ENCODE measurements at regions of chr2 and their contacts with region 1.

Region 1: GRCh38 chr2:181305301-181306123 is 151.7 kb upstream of the ITGA4 start:
- DNase-seq: peak; percentile 22
- ATAC-seq: peak; percentile 49
- H3K4me3 Mint-ChIP-seq: peak overlapping the region; percentile 70
- H3K27ac Mint-ChIP-seq: peak overlapping the region; percentile 95
- H3K4me1 Mint-ChIP-seq: peaks cover 69% of the 10 kb centered on the region
- H3K27me3 Mint-ChIP-seq: no peaks in the 10 kb centered on the region
- CTCF ChIP-seq: no peak

Region 2: DNA sequence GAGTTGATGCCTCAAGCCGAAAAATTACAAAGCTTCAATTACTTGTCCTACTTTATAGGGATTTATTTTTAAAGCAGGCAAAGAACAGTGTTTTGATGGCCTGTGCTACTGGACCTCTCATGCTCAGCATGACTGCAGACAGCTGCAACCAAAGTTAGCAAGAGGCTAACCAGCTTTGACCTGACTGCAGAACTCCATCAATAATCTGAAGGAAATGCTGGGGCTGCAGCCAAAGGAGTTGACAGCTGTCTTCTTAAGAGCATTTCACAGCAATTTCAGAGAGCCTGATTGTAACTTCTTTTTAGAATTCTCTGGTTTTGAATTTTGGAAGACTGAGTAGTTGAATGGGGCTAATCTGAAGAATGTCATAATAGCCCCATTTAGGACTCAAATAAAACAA is 1994.4 kb before region 1 on chr2:
- CTCF ChIA-PET with region 1: no interaction called
- POLR2A ChIA-PET with region 1: no interaction called
- intact Hi-C with region 1: no loop called
- DNase-seq: no peak
- ATAC-seq: no peak
- H3K4me3 Mint-ChIP-seq: no peak overlapping the region
- H3K27ac Mint-ChIP-seq: no peak overlapping the region
- H3K4me1 Mint-ChIP-seq: peaks cover 2% of the 10 kb centered on the region
- H3K27me3 Mint-ChIP-seq: peaks cover 4% of the 10 kb centered on the region
- CTCF ChIP-seq: no peak

Region 3: GRCh38 chr2:180952082-180952481 is 353.4 kb before region 1 on chr2:
- CTCF ChIA-PET with region 1: no interaction called
- POLR2A ChIA-PET with region 1: no interaction called
- intact Hi-C with region 1: no loop called
- DNase-seq: no peak
- ATAC-seq: no peak
- H3K4me3 Mint-ChIP-seq: no peak overlapping the region
- H3K27ac Mint-ChIP-seq: no peak overlapping the region
- H3K4me1 Mint-ChIP-seq: no peaks in the 10 kb centered on the region
- H3K27me3 Mint-ChIP-seq: peaks cover 12% of the 10 kb centered on the region
- CTCF ChIP-seq: no peak

Region 4: GRCh38 chr2:180980106-180980942 is 325.2 kb before region 1 on chr2 and contains the start of gene UBE2E3:
- CTCF ChIA-PET with region 1: interaction called, 3 read pairs
- POLR2A ChIA-PET with region 1: no interaction called
- intact Hi-C with region 1: loop called (anchors 5 kb)
- DNase-seq: peak; percentile 79
- ATAC-seq: peak; percentile 80
- H3K4me3 Mint-ChIP-seq: peak within 1 kb of the TSS; percentile 93
- H3K27ac Mint-ChIP-seq: peak within 1 kb of the TSS; percentile 95
- H3K4me1 Mint-ChIP-seq: peaks cover 37% of the 10 kb centered on the region
- H3K27me3 Mint-ChIP-seq: no peaks in the 10 kb centered on the region
- CTCF ChIP-seq: no peak
- total RNA-seq, gene UBE2E3: 33.1 and 33.6 TPM in 2 replicates

Region 5: DNA sequence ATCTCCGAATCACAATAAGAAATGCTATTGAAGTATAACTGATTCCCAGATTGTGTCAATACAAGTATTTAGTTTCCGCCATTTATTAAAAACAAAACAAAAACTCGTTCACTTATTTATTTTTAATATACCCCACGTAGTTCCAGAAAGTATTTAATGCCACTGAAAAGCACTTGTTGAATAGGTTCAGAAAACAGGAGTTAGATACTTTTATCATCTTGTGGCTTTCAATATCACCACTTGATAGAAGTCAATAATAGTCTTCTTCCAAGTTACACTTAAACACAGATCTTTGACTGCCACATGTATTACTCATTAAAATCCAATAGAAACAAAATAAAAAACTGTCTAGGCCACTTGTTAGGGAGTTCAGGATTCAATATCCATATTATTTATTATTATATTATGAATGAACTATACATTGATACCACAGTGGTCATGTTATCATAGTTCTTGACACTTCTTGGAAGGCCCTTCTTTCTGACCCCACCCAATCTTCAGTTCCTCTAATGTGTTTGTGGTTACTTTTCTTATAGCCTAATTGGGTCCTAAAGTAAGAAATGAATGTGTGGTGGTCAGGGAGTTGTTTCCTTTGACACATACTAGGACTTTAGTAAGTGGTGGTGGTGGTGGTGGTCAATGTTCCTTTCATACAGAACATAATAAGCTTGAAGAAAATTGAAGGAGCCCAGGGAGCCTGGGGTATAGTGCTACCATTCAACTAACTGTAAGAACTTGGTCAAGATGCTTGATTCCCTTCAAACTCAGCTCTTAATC is 69.6 kb before region 1 on chr2:
- CTCF ChIA-PET with region 1: no interaction called
- POLR2A ChIA-PET with region 1: no interaction called
- intact Hi-C with region 1: loop called (anchors 5 kb)
- DNase-seq: no peak
- ATAC-seq: peak; percentile 42
- H3K4me3 Mint-ChIP-seq: no peak overlapping the region
- H3K27ac Mint-ChIP-seq: no peak overlapping the region
- H3K4me1 Mint-ChIP-seq: peaks cover 15% of the 10 kb centered on the region
- H3K27me3 Mint-ChIP-seq: no peaks in the 10 kb centered on the region
- CTCF ChIP-seq: no peak

Region 6: GRCh38 chr2:181411105-181411849 is 105.8 kb after region 1 on chr2:
- CTCF ChIA-PET with region 1: interaction called, 7 read pairs
- POLR2A ChIA-PET with region 1: interaction called, 8 read pairs
- intact Hi-C with region 1: loop called (anchors 1 kb)
- DNase-seq: peak; percentile 54
- ATAC-seq: peak; percentile 98
- H3K4me3 Mint-ChIP-seq: peak overlapping the region; percentile 52
- H3K27ac Mint-ChIP-seq: peak overlapping the region; percentile 86
- H3K4me1 Mint-ChIP-seq: peaks cover 88% of the 10 kb centered on the region
- H3K27me3 Mint-ChIP-seq: no peaks in the 10 kb centered on the region
- CTCF ChIP-seq: no peak

Region 7: GRCh38 chr2:181457121-181457740 is 151.7 kb after region 1 on chr2 and contains the start of gene ITGA4:
- CTCF ChIA-PET with region 1: interaction called, 178 read pairs
- POLR2A ChIA-PET with region 1: interaction called, 289 read pairs
- intact Hi-C with region 1: loop called (anchors 1 kb)
- DNase-seq: peak; percentile 87
- ATAC-seq: peak; percentile 78
- H3K4me3 Mint-ChIP-seq: peak within 1 kb of the TSS; percentile 97
- H3K27ac Mint-ChIP-seq: peak within 1 kb of the TSS; percentile 97
- H3K4me1 Mint-ChIP-seq: peaks cover 64% of the 10 kb centered on the region
- H3K27me3 Mint-ChIP-seq: no peaks in the 10 kb centered on the region
- CTCF ChIP-seq: peak; percentile 23
- total RNA-seq, gene ITGA4: 89.2 and 104 TPM in 2 replicates

Region 8: DNA sequence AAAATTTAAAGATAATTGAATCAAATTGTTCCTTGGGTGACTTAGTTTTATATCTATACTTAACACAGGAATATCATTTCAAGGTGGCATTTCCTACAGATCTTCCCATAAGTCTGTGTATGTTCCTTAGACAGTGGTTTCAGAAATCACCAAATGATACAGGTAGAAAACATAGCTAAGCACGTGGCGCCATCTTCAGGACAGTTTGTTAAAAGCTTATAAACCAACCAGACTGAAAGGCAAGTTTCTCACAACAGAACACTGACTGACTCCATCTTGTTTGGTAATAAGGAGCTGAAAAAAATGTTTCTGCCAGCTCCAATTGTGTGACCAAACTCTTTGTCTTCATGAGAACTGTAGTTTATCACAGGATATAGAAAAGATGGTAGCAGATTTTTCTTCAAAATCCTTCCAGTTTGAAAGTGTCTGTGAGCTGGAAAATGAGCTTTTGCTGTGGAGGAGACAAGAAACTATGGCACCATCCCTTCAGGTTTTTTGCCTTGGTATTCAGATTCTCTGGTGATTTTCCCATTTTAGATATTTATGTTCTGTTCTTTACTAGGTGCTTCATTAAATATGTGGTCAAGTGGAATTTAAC is 409.6 kb after region 1 on chr2:
- CTCF ChIA-PET with region 1: interaction called, 28 read pairs
- POLR2A ChIA-PET with region 1: no interaction called
- intact Hi-C with region 1: loop called (anchors 5 kb)
- DNase-seq: peak; percentile 26
- ATAC-seq: peak; percentile 71
- H3K4me3 Mint-ChIP-seq: no peak overlapping the region
- H3K27ac Mint-ChIP-seq: no peak overlapping the region
- H3K4me1 Mint-ChIP-seq: no peaks in the 10 kb centered on the region
- H3K27me3 Mint-ChIP-seq: no peaks in the 10 kb centered on the region
- CTCF ChIP-seq: no peak

Region 9: DNA sequence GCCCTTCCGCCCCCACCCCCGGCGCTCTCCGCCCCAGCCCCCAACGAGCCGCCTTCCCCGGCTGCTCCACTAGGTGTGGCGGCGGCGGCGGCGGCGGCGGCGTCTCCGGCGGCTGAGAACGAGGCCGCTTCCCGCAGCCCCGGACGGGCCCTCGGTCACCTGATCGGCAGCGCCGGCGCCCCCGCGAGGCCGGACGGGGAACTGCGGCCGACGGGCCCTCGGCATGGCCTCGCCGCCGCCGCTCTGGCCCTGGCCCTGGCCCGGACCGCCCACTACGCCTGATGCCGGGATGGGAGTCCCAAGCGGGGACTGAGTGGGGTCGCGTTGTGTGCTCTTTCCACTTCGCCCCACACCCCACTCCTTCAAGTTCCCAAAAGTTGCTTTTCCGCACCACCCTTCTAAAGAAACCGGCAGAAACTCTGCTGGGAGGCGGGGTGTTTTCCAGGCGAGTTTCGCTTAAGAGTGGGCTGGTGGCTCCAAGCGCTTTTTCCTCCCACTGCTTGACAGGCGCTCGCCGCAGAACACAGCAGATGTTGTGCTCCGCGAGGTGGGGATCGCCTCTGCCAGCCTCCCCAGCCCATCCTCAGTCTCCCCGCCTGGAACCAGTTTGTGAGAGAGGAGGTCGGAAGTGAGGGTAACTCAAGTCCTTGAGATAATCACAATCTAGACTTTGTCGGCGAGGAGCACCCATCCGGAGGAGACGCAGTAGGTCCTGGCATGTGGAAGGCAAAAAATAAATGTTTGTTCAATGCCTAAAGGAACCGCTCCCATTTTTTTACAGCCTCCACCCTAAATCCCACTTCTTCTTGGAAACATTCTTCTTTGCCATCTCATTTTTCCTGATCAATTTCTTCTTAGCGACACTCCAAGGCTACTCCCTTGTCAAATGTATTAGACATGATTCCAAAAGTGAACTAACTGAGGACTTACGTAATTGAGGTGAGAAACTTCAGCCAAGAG is 1733.1 kb after region 1 on chr2 and contains the start of gene NCKAP1:
- CTCF ChIA-PET with region 1: no interaction called
- POLR2A ChIA-PET with region 1: no interaction called
- intact Hi-C with region 1: loop called (anchors 5 kb)
- DNase-seq: peak; percentile 59
- ATAC-seq: peak; percentile 70
- H3K4me3 Mint-ChIP-seq: peak within 1 kb of the TSS; percentile 55
- H3K27ac Mint-ChIP-seq: no peak within 1 kb of the TSS
- H3K4me1 Mint-ChIP-seq: peaks cover 27% of the 10 kb centered on the region
- H3K27me3 Mint-ChIP-seq: peaks cover 41% of the 10 kb centered on the region
- CTCF ChIP-seq: no peak
- total RNA-seq, gene NCKAP1: 0.22 TPM in 1 of 2 replicates, not detected in the other

Measured in activated B cell treated with CpG ODN at 0.5 μM for 24 hours (primary cell).